ENCODE measurements at regions of chr20 and their contacts with region 1.

Region 1: GRCh38 chr20:20824924-20825584 is 112.6 kb upstream of the RALGAPA2 start:
- DNase-seq: peak in 4 of 5 donors; percentile 25 to 40 (median 34)
- H3K4me3 ChIP-seq: no peak overlapping the region
- H3K4me3 Mint-ChIP-seq: no peak overlapping the region
- H3K27ac ChIP-seq: no peak overlapping the region
- H3K27ac Mint-ChIP-seq: no peak overlapping the region
- H3K4me1 ChIP-seq: peaks cover 5% of the 10 kb centered on the region
- H3K4me1 Mint-ChIP-seq: peaks cover 0 to 5% (median 1%) of the 10 kb centered on the region in 4 donors
- H3K27me3 ChIP-seq: peaks cover 4% of the 10 kb centered on the region
- H3K27me3 Mint-ChIP-seq: peaks cover 19 to 21% of the 10 kb centered on the region in 2 donors

Region 2: GRCh38 chr20:20664795-20665589 is 160.1 kb before region 1 on chr20:
- CTCF ChIA-PET with region 1: interaction called, 10 read pairs
- POLR2A ChIA-PET with region 1: no interaction called
- intact Hi-C with region 1: loop called (anchors 1 kb)
- DNase-seq: peak in 4 of 5 donors; percentile 7 to 13 (median 9)
- H3K4me3 ChIP-seq: no peak overlapping the region
- H3K4me3 Mint-ChIP-seq: no peak overlapping the region
- H3K27ac ChIP-seq: no peak overlapping the region
- H3K27ac Mint-ChIP-seq: peak overlapping the region in 1 of 7 donors; percentile 32
- H3K4me1 ChIP-seq: peaks cover 8% of the 10 kb centered on the region
- H3K4me1 Mint-ChIP-seq: peaks cover 19 to 43% (median 24%) of the 10 kb centered on the region in 4 donors
- H3K27me3 ChIP-seq: no peaks in the 10 kb centered on the region
- H3K27me3 Mint-ChIP-seq: no peaks in the 10 kb centered on the region